ENCODE measurements at regions of chr13 and their contacts with region 1.

Region 1: DNA sequence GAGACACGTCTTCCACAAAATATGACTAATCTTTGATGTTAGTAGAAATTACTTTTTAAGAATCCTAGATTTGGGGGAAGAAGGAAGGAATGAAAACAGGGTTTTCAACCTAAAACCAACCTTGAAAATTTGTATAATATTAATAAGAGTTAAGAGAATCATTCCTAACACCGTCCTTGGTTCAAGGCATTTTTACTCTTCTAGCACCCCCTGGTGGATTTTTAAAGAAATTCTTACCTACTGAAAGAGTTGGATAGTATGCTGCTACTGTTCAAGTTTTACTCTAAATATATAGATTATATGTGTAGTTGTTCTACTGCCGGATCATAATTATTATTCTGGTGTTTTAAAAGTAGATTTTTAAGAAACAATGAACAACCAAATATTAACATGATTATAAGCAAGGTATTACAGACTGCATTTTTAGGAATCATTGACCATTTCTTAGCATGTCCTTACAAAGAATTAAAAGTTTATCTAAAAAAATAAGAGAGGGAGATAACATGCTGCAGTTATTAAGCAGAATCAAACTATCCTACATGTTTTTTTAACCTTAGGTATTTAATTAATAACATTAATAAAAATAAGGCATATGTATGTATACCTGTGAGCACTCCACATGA is 7.4 kb upstream of the SLITRK6 start:
- DNase-seq: no peak
- ATAC-seq: no peak
- H3K4me3 ChIP-seq: no peak overlapping the region
- H3K27ac ChIP-seq: no peak overlapping the region
- H3K4me1 ChIP-seq: no peaks in the 10 kb centered on the region
- H3K27me3 ChIP-seq: no peaks in the 10 kb centered on the region

Region 2: DNA sequence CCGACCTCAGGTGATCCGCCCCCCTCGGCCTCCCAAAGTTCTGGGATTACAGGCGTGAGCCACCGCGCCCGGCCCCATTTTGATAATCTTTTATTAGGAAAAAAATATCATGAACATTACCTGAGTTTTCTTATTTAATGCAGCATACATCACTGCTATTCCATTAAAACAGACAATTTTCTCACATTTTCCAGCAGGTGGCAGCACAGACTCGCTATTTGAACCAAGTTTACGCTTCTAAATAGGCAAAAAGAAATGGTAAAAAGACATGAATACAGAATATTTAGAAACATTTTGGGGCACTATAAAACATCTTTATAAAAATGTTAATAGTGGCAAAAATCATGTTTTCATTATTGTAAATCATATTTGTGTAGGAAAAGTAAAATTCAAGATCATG is 910.5 kb before region 1 on chr13:
- intact Hi-C with region 1: loop called in 1 of 2 experiments (anchors 5 kb)
- DNase-seq: no peak
- ATAC-seq: no peak
- H3K4me3 ChIP-seq: no peak overlapping the region
- H3K27ac ChIP-seq: no peak overlapping the region
- H3K4me1 ChIP-seq: no peaks in the 10 kb centered on the region
- H3K27me3 ChIP-seq: no peaks in the 10 kb centered on the region

Region 3: DNA sequence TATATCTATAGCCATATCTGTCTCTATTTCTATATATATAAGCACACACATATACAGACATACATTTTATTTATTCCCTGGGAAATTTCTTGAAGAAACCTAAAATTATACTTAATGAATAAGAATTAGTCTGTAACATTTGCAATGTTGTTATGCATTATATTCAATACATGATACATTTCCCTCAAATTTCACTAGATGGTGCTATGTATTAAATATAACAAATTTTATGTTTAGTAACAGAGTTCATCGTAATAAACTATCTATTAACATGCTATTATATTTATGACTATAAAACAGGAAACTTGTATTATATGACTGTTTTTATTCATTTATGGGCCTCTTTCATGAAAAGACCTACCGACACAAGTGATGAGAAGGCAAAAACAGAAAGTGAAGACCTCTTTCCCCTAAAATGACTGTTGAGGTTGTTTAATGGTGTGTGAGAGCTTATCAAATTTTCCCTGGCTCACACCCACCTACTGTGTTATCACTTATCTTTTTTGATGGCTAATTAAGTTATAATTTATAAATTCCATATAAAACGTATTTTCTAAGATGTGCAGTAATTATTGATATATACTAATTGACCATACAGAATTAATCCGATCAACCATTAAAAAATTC is 889.3 kb before region 1 on chr13:
- intact Hi-C with region 1: loop called (anchors 5 kb)
- DNase-seq: no peak
- ATAC-seq: no peak
- H3K4me3 ChIP-seq: no peak overlapping the region
- H3K27ac ChIP-seq: no peak overlapping the region
- H3K4me1 ChIP-seq: no peaks in the 10 kb centered on the region
- H3K27me3 ChIP-seq: no peaks in the 10 kb centered on the region

Region 4: DNA sequence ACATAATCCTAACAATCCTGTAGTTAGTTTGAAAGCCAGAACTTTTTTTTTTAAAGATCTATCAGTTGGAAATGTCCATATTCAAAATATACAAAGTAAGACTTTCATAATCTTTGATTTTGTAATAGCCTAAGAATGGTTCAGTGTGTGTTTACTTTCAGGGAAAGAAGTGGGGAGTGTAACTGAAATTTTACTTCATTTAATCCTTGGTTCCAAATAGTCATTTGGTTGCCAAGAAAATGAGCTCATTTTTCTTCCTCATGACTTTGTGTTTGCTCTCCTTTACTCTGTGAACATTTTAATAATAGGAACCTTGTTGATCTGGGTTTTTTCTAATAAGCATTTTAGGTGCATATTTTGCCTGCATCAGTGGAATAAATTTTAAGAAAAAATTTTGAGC is 286.2 kb before region 1 on chr13:
- intact Hi-C with region 1: no loop called
- DNase-seq: no peak
- ATAC-seq: peak; percentile 68
- H3K4me3 ChIP-seq: no peak overlapping the region
- H3K27ac ChIP-seq: no peak overlapping the region
- H3K4me1 ChIP-seq: no peaks in the 10 kb centered on the region
- H3K27me3 ChIP-seq: no peaks in the 10 kb centered on the region

Measured in aorta (tissue), 5 donors.